HCT116 (cell line): ENCODE measurements at regions of chr4 and their contacts with region 1.

Region 1: GRCh38 chr4:121192480-121192879 is 28.4 kb upstream of the TNIP3 start:
- DNase-seq: peak; percentile 33
- ATAC-seq: peak; percentile 70
- H3K4me3 ChIP-seq: no peak overlapping the region
- H3K27ac ChIP-seq: no peak overlapping the region
- H3K4me1 ChIP-seq: peaks cover 0 to 3% of the 10 kb centered on the region in 2 experiments; a peak in 1 of 4 replicates
- H3K27me3 ChIP-seq: no peaks in the 10 kb centered on the region
- CTCF ChIP-seq: peak; percentile 66 to 78 (median 68)
- POLR2A ChIP-seq: no peak
- RAD21 ChIP-seq: peak; percentile 76

Region 2: DNA sequence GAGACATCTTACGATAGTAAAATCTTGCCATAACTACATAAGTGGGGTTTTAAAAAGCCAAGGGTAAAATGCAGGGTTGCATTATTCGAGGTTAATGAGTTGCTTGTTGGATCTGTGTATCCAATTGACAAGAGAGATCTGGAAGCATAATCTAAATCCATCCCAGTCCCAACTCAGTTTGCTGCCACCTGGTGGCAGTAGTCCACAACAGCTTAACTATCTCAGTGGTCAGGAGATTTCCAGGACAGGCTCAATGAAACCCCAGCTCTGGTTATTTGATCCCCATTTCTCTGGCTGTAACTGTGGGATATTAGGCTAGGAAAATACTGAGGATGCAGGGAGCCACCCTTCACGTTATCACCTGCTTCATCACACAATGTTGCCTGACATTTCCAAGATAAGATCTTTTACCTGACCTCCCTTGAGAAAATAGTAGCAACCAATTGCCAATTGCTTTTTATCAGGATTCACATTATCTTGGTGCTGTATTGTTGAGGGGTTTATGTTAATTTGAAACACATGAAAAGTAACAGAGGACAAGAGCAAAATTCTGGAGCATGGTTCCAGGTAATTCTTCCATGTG is 59.8 kb after region 1 on chr4:
- CTCF ChIA-PET with region 1: interaction called, 33 read pairs
- POLR2A ChIA-PET with region 1: no interaction called
- RAD21 ChIA-PET with region 1: interaction called in 1 of 2 experiments, 3 read pairs
- intact Hi-C with region 1: loop called (anchors 1 kb)
- DNase-seq: peak; percentile 48
- ATAC-seq: peak; percentile 96
- H3K4me3 ChIP-seq: no peak overlapping the region
- H3K27ac ChIP-seq: no peak overlapping the region
- H3K4me1 ChIP-seq: peaks cover 3 to 9% of the 10 kb centered on the region in 2 experiments; a peak in 3 of 4 replicates
- H3K27me3 ChIP-seq: no peaks in the 10 kb centered on the region
- CTCF ChIP-seq: peak; percentile 59 to 86 (median 81); a peak in 5 of 6 replicates
- POLR2A ChIP-seq: no peak
- RAD21 ChIP-seq: peak; percentile 67

Region 3: GRCh38 chr4:121421594-121421993 is 229.1 kb after region 1 on chr4:
- CTCF ChIA-PET with region 1: interaction called, 13 read pairs
- POLR2A ChIA-PET with region 1: no interaction called
- RAD21 ChIA-PET with region 1: no interaction called
- intact Hi-C with region 1: loop called (anchors 5 kb)
- DNase-seq: peak; percentile 13
- ATAC-seq: no peak
- H3K4me3 ChIP-seq: no peak overlapping the region
- H3K27ac ChIP-seq: no peak overlapping the region
- H3K4me1 ChIP-seq: no peaks in the 10 kb centered on the region
- H3K27me3 ChIP-seq: no peaks in the 10 kb centered on the region
- CTCF ChIP-seq: peak; percentile 54 to 76 (median 59); a peak in 5 of 6 replicates
- POLR2A ChIP-seq: no peak
- RAD21 ChIP-seq: peak; percentile 71

Region 4: GRCh38 chr4:122666527-122667245 is 1474.2 kb after region 1 on chr4:
- CTCF ChIA-PET with region 1: no interaction called
- POLR2A ChIA-PET with region 1: no interaction called
- RAD21 ChIA-PET with region 1: no interaction called
- intact Hi-C with region 1: no loop called
- DNase-seq: peak; percentile 52
- ATAC-seq: peak; percentile 66
- H3K4me3 ChIP-seq: no peak overlapping the region
- H3K27ac ChIP-seq: peak overlapping the region; percentile 40; the same call in 1 of the 2 replicates
- H3K4me1 ChIP-seq: peaks cover 12 to 47% of the 10 kb centered on the region in 2 experiments
- H3K27me3 ChIP-seq: no peaks in the 10 kb centered on the region
- CTCF ChIP-seq: no peak
- POLR2A ChIP-seq: no peak
- RAD21 ChIP-seq: no peak